Activated CD8-positive, alpha-beta T cell treated with anti-CD3 and anti-CD28 coated beads, Interleukin-2, amount 10 ng/mL, durations not matched to agents 7 days and 5 days (primary cell): ENCODE measurements at regions of chr5 and their contacts with region 1.

Region 1: DNA sequence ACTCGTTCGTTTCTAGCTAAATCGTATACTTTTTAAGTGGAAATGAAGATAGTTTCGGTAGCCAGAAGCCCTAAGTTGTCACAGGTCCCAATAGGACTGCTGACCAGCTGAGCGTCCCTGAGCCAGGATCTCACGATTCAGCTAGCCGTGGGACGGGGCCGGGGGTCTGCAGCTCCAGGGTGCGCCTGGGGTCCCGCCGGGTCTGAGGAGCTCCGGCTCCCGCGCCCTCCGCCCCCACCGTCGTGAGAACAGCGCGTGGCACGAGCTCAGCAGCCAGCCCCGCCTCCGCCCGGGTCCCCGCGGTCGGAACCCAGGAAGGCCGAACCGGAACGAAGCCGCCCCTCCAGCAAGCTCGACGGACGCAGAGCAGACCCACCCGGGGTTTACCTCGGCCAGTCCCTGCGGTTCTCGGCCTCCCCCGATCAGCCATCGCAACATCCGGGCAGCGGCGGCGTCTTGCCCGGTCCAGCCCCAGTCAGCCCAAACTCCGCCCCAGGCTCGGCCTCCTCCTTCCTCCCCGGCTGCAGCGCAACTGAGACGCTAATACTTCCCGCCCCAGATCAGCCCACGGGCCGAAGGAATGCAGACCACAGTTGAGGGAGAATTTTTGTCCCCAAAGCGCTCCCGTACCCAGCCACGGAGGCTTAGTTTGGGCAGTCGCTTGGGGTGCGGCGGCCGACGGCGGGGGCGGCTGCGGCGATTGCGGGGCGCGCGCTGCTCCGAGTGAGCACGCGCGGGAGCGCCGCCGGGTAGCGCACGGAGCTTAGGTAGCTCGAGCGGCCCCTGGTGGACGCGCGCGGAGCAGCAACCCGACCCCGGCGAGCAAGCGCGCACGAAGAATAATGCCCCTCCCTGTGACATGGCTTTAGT is at the start of gene WDR41:
- DNase-seq: peak; percentile 89
- ATAC-seq: peak; percentile 90
- H3K4me3 Mint-ChIP-seq: peak within 1 kb of the TSS; percentile 85
- H3K27ac Mint-ChIP-seq: peak within 1 kb of the TSS; percentile 94
- H3K4me1 Mint-ChIP-seq: peaks cover 23% of the 10 kb centered on the region
- H3K27me3 Mint-ChIP-seq: peaks cover 8% of the 10 kb centered on the region
- total RNA-seq, gene WDR41: 15.6 to 21.4 TPM

Region 2: GRCh38 chr5:77076961-77077823 is 414.8 kb before region 1 on chr5:
- CTCF ChIA-PET with region 1: interaction called, 15 read pairs
- POLR2A ChIA-PET with region 1: no interaction called
- DNase-seq: peak; percentile 68
- ATAC-seq: peak; percentile 89
- H3K4me3 Mint-ChIP-seq: peak overlapping the region; percentile 52
- H3K27ac Mint-ChIP-seq: no peak overlapping the region
- H3K4me1 Mint-ChIP-seq: peaks cover 6% of the 10 kb centered on the region
- H3K27me3 Mint-ChIP-seq: peaks cover 2% of the 10 kb centered on the region

Region 3: DNA sequence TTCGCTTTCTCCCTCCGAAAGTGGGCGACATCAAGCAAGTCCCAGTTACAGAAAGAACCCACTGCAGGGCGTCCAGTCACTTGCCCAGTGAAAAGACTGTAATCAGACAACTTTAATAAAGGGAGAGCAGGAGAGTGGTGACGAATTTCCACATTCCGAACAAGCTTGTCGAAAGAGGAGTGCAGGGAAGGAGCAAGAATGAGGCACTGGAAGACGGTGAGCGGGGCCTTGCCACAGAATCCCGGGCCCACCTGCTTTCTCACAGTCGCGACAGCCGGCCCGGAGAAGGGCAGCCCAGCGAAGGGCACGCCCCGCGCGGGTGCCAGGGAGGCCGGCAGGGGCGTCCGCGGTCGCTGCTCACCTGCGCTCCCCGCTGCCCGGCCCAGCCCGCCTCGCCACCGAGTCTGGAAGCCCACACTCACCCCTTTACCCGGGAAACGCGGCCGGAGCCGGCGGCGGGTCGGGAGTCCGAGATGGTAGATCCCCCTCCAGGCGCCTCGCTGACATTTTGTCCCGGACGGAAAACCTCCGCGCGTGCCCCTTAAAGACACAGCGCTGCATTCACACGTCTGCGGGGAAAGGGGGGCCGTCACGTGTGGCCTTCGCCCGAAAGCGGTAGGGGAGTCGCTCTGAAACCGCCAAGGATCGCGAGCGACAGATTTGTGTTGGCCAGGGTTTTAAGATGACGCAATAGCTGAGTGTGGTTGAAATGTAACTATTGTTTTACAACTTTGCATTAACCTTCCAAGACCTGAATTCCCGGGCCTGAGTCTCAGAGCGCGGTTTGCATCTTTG is 405.1 kb before region 1 on chr5 and contains the start of gene ZBED3:
- CTCF ChIA-PET with region 1: interaction called, 11 read pairs
- POLR2A ChIA-PET with region 1: no interaction called
- DNase-seq: peak; percentile 70
- ATAC-seq: peak; percentile 89
- H3K4me3 Mint-ChIP-seq: peak within 1 kb of the TSS; percentile 77
- H3K27ac Mint-ChIP-seq: peak within 1 kb of the TSS; percentile 80
- H3K4me1 Mint-ChIP-seq: peaks cover 16% of the 10 kb centered on the region
- H3K27me3 Mint-ChIP-seq: no peaks in the 10 kb centered on the region
- total RNA-seq, gene ZBED3: 2.0 TPM

Region 4: GRCh38 chr5:77143998-77144836 is 347.8 kb before region 1 on chr5:
- CTCF ChIA-PET with region 1: interaction called, 38 read pairs
- POLR2A ChIA-PET with region 1: no interaction called
- DNase-seq: peak; percentile 74
- ATAC-seq: peak; percentile 68
- H3K4me3 Mint-ChIP-seq: no peak overlapping the region
- H3K27ac Mint-ChIP-seq: no peak overlapping the region
- H3K4me1 Mint-ChIP-seq: peaks cover 5% of the 10 kb centered on the region
- H3K27me3 Mint-ChIP-seq: peaks cover 3% of the 10 kb centered on the region

Region 5: GRCh38 chr5:77155179-77155785 is 336.7 kb before region 1 on chr5:
- CTCF ChIA-PET with region 1: interaction called, 11 read pairs
- POLR2A ChIA-PET with region 1: interaction called, 5 read pairs
- DNase-seq: peak; percentile 51
- ATAC-seq: peak; percentile 83
- H3K4me3 Mint-ChIP-seq: no peak overlapping the region
- H3K27ac Mint-ChIP-seq: peak overlapping the region; percentile 0
- H3K4me1 Mint-ChIP-seq: peaks cover 20% of the 10 kb centered on the region
- H3K27me3 Mint-ChIP-seq: peaks cover 10% of the 10 kb centered on the region